ENCODE measurements at regions of chr3 and their contacts with region 1.

Region 1: DNA sequence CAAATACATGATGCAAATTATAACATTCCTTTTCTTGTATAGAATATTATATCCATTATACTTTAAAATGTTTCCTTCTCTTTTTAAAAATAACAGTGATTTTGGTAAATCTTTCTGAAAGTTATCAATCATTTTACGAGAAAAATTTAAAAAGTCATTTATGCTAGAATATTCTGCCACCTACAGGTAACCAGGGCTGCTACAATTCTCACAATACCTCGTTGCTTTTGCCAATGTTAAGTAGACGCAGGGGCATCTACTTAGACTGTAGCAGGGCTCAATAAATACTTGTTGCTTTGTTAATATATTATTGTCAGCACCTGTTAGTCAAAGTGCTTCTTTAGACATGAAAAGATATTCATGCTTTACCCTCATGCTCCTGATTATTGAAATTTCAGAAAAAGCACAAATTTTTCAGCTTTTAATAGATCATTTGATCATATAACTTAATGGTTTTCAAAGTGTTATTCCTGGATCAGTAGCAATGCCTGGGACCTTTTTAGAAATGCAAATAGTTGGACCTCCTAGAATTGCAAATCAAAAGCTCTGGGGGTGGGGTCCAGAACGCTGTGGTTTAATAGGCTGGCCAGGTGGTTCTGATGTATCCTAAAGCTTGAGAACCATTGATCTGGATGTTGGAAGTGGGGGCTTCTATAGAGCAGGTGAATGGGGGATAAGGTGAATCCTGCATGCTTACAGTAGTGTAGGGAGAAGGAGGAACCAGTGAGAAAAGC is 223.6 kb upstream of the PDZRN3 start:
- DNase-seq: peak; percentile 32 to 66
- H3K4me3 ChIP-seq: no peak overlapping the region
- H3K4me1 ChIP-seq: no peaks in the 10 kb centered on the region
- H3K27me3 ChIP-seq: no peaks in the 10 kb centered on the region

Region 2: GRCh38 chr3:73100741-73101559 is 747.4 kb before region 1 on chr3:
- in situ Hi-C with region 1: loop called (anchors 25 kb)
- DNase-seq: peak; percentile 76 to 93
- H3K4me3 ChIP-seq: no peak overlapping the region
- H3K4me1 ChIP-seq: no peaks in the 10 kb centered on the region
- H3K27me3 ChIP-seq: no peaks in the 10 kb centered on the region

Region 3: GRCh38 chr3:73502609-73503583 is 345.4 kb before region 1 on chr3:
- in situ Hi-C with region 1: loop called (anchors 10 kb)
- DNase-seq: peak; percentile 79
- H3K4me3 ChIP-seq: no peak overlapping the region
- H3K4me1 ChIP-seq: no peaks in the 10 kb centered on the region
- H3K27me3 ChIP-seq: no peaks in the 10 kb centered on the region

Region 4: GRCh38 chr3:73707772-73708171 is 140.6 kb before region 1 on chr3:
- in situ Hi-C with region 1: no loop called
- DNase-seq: no peak
- H3K4me3 ChIP-seq: no peak overlapping the region
- H3K4me1 ChIP-seq: no peaks in the 10 kb centered on the region
- H3K27me3 ChIP-seq: no peaks in the 10 kb centered on the region

Region 5: DNA sequence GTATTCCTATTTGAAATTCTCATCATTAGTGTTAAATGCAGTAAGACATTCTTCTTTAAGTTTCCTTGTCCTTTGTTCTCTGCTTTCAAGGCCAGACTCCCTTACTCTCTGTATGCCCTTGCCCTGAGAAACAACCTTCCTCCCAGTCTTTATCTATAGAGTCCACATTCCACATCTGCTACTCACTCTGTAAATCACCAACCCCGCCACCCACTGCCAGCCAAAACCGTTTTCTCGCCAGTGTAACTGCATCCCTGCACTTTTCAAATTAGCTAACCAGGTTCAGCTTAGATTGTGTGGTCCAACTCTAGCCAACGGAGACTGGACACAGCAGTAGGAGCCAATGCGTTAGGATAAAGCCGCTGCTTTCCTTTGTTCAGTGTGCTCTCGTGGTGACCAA is 178.8 kb after region 1 on chr3:
- in situ Hi-C with region 1: no loop called
- DNase-seq: no peak
- H3K4me3 ChIP-seq: no peak overlapping the region
- H3K4me1 ChIP-seq: 0 out of 2 replicates have a peak, but pooled peaks cover 3% of the 10 kb centered on the region
- H3K27me3 ChIP-seq: no peaks in the 10 kb centered on the region

Measured in HAP-1 (cell line).